Tibial artery (tissue), 4 donors: ENCODE measurements at regions of chr6 and their contacts with region 1.

Region 1: DNA sequence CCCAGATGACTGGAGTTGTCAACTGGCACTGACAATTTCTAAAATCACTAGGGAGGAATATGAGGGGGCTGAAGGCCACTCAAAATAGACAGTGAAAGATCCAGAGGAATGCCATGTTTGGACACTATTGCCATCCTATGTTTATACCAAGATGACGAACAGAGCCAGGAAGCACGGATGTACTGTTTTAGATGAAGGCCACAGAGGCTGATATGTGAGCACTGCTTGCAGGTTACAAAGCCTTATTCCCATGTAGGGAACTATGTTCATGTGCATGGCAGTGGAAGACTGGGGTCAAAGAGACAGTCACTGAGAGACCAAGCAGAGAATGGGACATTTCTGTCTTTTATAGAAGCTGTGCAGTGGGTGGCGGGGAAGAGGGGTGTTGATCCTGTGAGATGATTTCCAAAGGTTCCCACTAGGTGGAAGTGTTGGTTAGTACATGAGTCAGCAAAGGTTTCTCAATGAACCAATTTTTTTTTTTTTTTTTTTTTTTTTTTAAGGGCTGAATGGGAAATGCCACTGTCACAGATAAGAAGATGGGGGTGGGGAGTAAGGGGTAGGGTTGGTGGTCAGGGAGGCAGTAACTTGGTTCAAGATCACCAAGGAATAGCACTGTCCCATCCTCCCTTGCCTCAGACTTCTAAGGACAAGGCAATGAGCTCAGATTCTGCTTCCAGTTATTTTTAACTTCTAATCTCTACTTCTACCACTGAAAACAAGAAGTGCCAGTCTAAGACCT is 46.7 kb upstream of the MOCS1 start:
- DNase-seq: peak in 1 of 2 donors; percentile 45
- H3K4me3 ChIP-seq: no peak overlapping the region
- H3K27ac ChIP-seq: peak overlapping the region; percentile 64
- H3K4me1 ChIP-seq: peaks cover 0 to 39% (median 30%) of the 10 kb centered on the region in 4 donors
- H3K27me3 ChIP-seq: no peaks in the 10 kb centered on the region
- CTCF ChIP-seq: peak; percentile 44 to 63

Region 2: DNA sequence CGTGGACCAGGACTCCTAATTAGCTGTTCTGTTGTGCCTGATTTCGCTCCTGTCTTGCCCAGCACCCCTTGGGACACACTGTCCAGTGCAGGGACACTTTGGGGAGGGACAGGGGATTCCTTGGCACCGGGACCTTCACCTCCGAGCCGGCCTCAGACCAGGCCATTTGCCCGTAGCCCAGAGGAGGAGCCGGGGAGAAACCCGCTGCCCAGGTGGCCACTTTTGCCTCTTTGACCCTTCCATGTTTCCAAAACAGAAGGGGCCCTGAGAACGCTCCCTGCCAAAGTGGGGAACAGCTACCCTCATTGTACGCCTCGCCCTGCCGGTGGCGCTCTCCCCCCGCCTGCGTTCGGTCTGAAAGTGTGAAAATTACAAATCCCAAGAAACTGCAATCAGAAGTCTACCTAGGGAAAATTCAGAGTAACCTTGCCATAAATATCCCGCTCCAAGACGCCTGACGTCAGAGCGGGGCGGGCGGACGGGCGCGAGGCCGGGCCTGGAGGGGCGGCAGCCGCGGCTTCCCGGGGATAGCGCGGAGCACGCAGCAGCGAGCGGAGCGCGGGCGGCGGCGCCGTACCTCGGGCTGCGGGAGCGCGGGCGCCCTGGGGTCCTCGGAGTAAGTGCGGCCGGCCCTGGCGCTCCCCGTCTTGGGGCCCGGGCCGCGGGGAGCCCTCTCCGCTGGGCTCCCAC is 189.0 kb before region 1 on chr6 and contains the start of gene DAAM2:
- intact Hi-C with region 1: no loop called
- DNase-seq: peak; percentile 63 to 89
- H3K4me3 ChIP-seq: peak within 1 kb of the TSS; percentile 63 to 82
- H3K27ac ChIP-seq: peak within 1 kb of the TSS; percentile 86 to 95
- H3K4me1 ChIP-seq: peaks cover 0 to 52% (median 30%) of the 10 kb centered on the region in 4 donors
- H3K27me3 ChIP-seq: no peaks in the 10 kb centered on the region
- CTCF ChIP-seq: peak in 1 of 2 experiments; percentile 11

Region 3: DNA sequence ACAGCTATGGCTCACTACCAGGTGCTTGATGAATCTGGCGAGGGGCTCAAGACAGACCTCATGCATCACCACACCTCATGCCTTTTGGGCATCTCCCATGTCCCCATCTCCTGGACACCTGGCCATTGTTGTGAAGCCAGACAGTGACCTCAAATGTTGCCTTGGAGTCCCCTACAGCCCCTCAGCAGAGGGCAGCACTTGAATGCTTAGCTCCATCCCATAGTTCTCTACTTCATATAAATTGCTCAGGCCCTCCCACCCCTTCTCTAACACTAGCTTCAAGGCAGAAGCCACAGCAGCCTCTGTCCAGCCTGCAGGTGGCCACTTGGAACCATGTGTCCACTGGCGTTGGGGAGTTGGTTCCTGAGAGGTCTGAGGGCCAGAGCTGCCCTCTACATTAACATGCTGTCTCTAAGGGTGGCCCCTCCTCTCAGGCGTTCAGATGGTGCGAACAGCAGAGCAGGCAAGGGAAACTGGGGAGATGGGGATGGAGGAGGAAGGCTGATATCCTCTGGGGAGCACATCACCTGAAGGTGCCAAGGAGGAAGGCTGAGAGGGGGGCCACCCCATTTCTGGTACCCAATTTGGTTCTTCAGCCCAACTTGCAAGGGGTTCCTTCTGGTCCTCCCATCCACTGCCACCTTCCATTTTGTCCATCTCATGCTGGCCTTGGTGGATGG is 78.1 kb before region 1 on chr6:
- intact Hi-C with region 1: no loop called
- DNase-seq: peak in 1 of 2 donors; percentile 62
- H3K4me3 ChIP-seq: no peak overlapping the region
- H3K27ac ChIP-seq: peak overlapping the region in 1 of 2 donors; percentile 31
- H3K4me1 ChIP-seq: peaks cover 0 to 11% (median 5%) of the 10 kb centered on the region in 4 donors
- H3K27me3 ChIP-seq: no peaks in the 10 kb centered on the region
- CTCF ChIP-seq: no peak

Region 4: GRCh38 chr6:40308533-40309306 is 327.7 kb after region 1 on chr6:
- intact Hi-C with region 1: loop called (anchors 5 kb)
- DNase-seq: peak in 1 of 2 donors; percentile 51
- H3K4me3 ChIP-seq: no peak overlapping the region
- H3K27ac ChIP-seq: no peak overlapping the region
- H3K4me1 ChIP-seq: peaks cover 0 to 4% (median 2%) of the 10 kb centered on the region in 4 donors
- H3K27me3 ChIP-seq: peaks cover 0 to 14% of the 10 kb centered on the region in 2 donors
- CTCF ChIP-seq: peak; percentile 79 to 84

Region 5: GRCh38 chr6:41002216-41002615 is 1021.2 kb after region 1 on chr6:
- intact Hi-C with region 1: no loop called
- DNase-seq: no peak
- H3K4me3 ChIP-seq: no peak overlapping the region
- H3K27ac ChIP-seq: no peak overlapping the region
- H3K4me1 ChIP-seq: no peaks in the 10 kb centered on the region
- H3K27me3 ChIP-seq: peaks cover 0 to 7% of the 10 kb centered on the region in 2 donors
- CTCF ChIP-seq: no peak

Region 6: DNA sequence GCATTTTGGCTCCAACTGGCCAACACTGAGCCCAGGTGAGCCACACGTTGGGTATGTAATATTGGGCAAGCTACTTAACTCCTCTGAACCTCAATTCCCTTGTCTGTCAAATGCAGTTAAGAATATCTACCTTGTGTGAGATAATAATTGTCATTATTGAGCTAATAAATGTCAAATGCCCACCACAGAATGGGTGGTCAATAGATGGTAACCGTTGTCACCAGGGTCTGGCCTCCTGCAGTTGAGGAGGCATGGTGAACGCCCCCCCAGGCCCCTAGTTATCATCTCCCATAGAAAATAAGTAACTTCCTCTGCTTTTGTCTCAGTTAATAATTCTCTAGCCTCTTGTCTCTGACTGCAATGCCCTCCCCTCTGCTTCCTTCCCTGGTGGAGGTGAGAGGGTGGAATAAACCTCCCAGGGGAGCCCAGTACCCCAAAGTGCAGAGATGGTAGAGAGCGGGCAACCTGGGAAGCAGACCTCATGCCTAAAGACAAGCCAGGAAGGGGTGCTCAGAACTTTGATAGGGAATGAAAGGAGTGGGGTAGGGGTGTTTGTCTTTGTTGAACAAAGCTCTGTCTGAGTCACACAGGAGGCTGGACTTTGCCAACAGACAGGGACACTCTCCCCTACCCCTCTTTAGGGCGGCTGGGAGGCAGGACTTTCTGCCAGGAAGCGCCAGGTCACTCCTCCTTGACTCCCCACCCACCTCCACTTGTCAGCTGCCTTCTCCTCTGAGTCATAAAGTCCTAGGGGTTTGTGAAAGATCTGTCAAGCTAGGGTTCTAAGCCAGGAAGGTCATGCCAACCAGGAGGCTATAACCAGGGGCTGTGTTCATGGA is 1059.3 kb after region 1 on chr6:
- intact Hi-C with region 1: loop called (anchors 10 kb)
- DNase-seq: no peak
- H3K4me3 ChIP-seq: no peak overlapping the region
- H3K27ac ChIP-seq: no peak overlapping the region
- H3K4me1 ChIP-seq: no peaks in the 10 kb centered on the region
- H3K27me3 ChIP-seq: no peaks in the 10 kb centered on the region
- CTCF ChIP-seq: no peak